Dendritic cell treated with granulocyte-macrophage colony-stimulating factor and Interleukin-4, amounts not matched to agents 40 ng/mL and 50 ng/mL, for 4 days (primary cell): ENCODE measurements at regions of chr1 and their contacts with region 1.

Region 1: DNA sequence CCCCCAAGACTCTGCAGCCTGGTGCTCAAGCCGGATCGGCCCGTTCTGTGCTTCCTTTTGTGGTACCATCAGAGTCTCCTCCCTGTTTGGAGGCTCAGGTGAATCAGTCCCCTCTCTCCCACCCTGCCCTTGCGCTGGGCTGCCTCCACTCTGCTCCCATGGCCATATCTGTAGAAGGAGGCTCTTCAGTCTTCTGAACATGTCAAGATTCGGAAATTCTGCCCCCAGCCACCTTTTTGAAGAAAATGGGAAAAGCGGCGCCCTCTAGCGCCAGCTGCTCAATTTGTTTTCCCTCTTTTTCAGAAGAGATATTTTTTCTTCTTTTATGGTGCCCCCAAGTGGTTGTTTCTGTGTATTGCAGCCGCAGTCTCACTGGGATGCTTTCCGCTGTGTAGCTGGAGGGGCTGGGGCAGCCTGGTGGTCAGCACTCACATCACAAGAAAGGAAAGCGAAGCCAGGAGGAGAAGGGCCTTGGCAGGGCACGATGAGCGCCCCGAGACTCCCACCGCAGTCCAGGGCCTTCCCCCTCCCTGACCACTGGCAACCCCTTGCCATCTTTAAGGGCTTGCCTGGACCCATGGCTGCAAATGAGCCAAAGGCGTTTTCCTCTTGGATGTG is 58.4 kb upstream of the CACNA1E start:
- H3K4me3 Mint-ChIP-seq: no peak overlapping the region
- H3K27ac Mint-ChIP-seq: no peak overlapping the region
- H3K4me1 Mint-ChIP-seq: peaks cover 16% of the 10 kb centered on the region
- H3K27me3 Mint-ChIP-seq: peaks cover 15% of the 10 kb centered on the region

Region 2: GRCh38 chr1:180881806-180882509 is 542.9 kb before region 1 on chr1:
- intact Hi-C with region 1: loop called (anchors 10 kb)
- H3K4me3 Mint-ChIP-seq: no peak overlapping the region
- H3K27ac Mint-ChIP-seq: no peak overlapping the region
- H3K4me1 Mint-ChIP-seq: no peaks in the 10 kb centered on the region
- H3K27me3 Mint-ChIP-seq: no peaks in the 10 kb centered on the region

Region 3: DNA sequence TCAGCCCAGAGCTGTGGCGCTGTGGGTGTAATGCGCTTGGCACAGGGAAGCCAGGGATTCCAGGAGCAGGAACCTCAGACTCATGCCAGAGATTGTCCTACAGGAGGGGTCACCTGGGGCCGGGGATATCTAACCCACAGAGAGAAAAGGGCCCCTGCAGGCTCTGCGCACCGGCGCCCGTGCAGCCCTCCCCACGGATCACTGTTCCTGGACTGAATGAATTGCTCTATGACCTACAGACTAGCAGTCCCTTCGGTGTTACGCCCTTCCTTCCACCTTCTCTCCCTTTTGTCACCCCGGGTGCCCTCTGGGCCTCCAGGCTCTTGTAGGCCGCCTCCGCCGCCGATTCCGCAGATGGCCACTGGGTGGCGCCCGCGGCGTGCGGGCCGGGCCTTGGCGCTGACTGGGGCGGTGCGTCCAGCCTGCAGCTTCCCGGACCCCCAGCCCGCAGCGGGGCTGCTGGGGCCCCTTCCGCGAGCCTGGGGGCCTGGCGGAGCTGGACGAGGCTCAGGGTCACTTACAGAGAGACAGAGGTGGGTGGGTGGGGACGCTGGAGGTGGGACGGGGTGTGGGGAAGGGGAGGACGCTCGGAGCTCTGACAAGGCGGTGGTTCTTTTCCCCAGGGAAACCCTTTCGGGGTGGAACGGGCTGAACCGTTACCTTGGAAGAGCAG is 235.1 kb before region 1 on chr1:
- intact Hi-C with region 1: loop called (anchors 1 kb)
- H3K4me3 Mint-ChIP-seq: no peak overlapping the region
- H3K27ac Mint-ChIP-seq: no peak overlapping the region
- H3K4me1 Mint-ChIP-seq: peaks cover 6% of the 10 kb centered on the region
- H3K27me3 Mint-ChIP-seq: peaks cover 29% of the 10 kb centered on the region

Region 4: GRCh38 chr1:181347495-181348390 is 77.2 kb before region 1 on chr1:
- intact Hi-C with region 1: no loop called
- H3K4me3 Mint-ChIP-seq: no peak overlapping the region
- H3K27ac Mint-ChIP-seq: no peak overlapping the region
- H3K4me1 Mint-ChIP-seq: no peaks in the 10 kb centered on the region
- H3K27me3 Mint-ChIP-seq: peaks cover 1% of the 10 kb centered on the region